Dorsolateral prefrontal cortex (tissue), 120 donors: ENCODE measurements at regions of chr3 and their contacts with region 1.

Region 1: GRCh38 chr3:157174649-157175498 is 14.9 kb upstream of the CCNL1 start:
- DNase-seq: peak; percentile 95 to 98 (median 97)
- H3K4me3 ChIP-seq: peak overlapping the region; percentile 49 to 98 (median 75)
- H3K27ac ChIP-seq: peak overlapping the region; percentile 83 to 99 (median 96)
- H3K27me3 ChIP-seq: no peaks in the 10 kb centered on the region
- CTCF ChIP-seq: peak in 32 of 56 donors; percentile 6 to 60 (median 34)

Region 2: DNA sequence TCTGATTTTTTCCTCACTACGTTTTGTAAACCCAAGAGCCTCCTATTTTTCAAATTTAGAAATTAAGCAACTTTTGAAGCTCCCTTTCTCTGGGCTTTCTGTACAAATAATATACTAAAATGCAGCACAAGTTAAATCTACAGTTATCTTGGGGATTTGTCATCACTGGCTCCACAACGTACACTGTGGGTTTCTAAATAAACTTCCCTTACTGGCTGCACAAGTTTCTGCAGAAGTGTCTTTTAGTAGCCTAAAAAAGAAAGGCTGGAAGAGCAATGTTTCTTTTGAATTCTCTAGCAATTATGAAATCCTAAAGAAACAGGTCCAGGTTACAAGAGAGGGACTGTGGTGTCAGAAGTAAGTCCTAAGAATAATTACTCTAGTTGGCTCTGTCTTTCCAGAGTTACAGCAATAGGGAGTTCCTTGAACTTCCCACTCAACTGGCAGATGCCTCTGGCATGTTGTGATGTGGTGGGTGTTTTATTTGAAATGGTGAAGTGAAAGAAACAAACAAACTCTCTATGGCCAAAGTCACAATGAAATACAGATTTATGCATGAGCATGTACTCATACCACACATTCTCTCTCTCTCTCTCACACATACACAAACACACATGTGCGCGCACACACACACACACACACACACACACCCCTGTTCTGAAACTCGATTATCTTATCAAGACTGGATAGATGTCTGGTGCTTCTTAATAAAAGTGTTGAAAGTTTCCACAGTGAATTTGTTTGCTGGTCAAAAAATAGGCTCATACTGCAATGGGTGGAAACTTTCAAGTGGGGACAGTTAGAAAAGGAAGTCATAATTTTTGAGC is 818.1 kb before region 1 on chr3:
- intact Hi-C with region 1: no loop called
- DNase-seq: no peak
- H3K4me3 ChIP-seq: no peak overlapping the region
- H3K27ac ChIP-seq: no peak overlapping the region
- H3K27me3 ChIP-seq: no peaks in the 10 kb centered on the region
- CTCF ChIP-seq: no peak

Region 3: DNA sequence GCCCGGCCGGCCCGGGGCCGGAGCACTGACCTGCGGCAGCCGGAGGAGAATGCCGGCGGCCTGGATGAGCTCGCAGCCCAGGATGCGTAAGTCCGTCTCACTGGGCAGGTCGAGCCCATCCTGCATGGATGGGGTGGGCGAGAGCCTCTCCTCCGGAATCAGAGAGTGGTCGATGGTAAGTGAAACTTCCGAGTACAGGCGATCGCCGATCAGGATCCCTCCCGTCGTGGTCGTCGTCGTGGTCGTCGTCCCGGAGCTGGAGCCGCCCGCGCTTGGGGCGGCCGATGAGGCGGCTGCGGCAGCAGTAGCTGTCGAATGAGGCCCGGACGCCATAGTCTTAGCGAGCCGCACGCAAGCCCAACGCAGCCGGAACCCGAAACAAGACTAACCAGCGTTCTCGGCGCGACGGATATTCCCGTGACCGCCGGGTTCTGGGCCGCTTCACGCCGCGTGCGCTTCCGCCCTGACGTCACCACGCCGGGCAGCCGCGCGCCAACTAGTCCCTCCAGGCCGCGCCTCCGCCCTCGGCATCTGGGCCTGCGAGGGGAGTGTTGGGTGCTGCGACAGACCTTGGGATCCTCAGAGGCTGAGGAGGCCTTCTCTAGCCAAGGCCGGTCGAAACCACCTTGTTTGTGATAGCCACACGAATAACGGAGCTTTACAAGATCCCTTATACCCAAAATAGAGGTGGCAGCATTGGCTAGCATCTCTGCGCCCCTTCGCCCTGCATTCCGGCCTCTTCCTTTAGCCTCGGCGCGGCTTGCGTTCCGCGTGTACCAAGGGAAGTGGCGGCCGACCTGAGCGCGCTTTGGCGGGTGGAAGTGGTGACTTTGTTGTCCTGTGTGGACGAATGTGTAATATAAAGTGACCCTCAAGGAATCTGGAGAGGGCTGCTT is 14.9 kb before region 1 on chr3 and contains the start of gene CCNL1:
- intact Hi-C with region 1: loop called (anchors 1 kb)
- DNase-seq: peak; percentile 90 to 96 (median 94)
- H3K4me3 ChIP-seq: peak within 1 kb of the TSS; percentile 72 to 100 (median 97)
- H3K27ac ChIP-seq: peak within 1 kb of the TSS; percentile 92 to 100 (median 99)
- H3K27me3 ChIP-seq: no peaks in the 10 kb centered on the region
- CTCF ChIP-seq: peak in 24 of 56 donors; percentile 2 to 54 (median 26)
- total RNA-seq, gene CCNL1: 53.0 to 156 (median 94.4) TPM

Region 4: DNA sequence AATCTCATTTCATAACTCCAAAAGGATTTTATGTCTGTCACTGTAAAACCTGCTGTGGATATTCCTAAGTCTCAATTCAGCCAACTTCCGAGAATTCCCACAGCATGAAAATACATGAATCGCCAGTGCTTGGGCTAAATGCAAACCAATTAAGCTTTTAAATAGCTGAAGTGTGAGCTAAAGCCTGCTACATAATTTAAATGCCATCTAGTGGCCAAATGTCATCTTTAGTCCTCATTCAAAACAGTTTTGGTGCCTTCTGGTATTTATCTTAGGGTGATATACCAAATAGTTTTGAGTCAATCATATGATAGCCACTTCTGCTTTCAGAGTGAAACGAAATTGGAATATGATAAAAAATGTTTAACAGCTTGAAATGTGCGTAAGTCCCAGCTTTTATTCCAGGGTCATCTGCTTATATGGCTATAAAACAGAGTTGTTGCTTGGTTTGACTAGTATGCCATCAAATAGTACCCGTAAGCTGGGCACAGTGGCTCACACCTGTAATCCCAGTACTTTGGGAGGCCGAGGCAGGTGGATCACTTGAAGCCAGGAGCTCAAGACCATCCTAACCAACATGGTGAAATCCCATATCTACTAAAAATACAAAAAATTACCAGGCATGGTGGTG is 26.9 kb after region 1 on chr3:
- intact Hi-C with region 1: no loop called
- DNase-seq: no peak
- H3K4me3 ChIP-seq: peak overlapping the region in 15 of 59 donors; percentile 7 to 36 (median 15)
- H3K27ac ChIP-seq: no peak overlapping the region
- H3K27me3 ChIP-seq: no peaks in the 10 kb centered on the region
- CTCF ChIP-seq: peak; percentile 43 to 82 (median 66)

Region 5: GRCh38 chr3:157405457-157405856 is 230.6 kb after region 1 on chr3:
- intact Hi-C with region 1: no loop called
- DNase-seq: no peak
- H3K4me3 ChIP-seq: no peak overlapping the region
- H3K27ac ChIP-seq: no peak overlapping the region
- H3K27me3 ChIP-seq: no peaks in the 10 kb centered on the region
- CTCF ChIP-seq: no peak

Region 6: DNA sequence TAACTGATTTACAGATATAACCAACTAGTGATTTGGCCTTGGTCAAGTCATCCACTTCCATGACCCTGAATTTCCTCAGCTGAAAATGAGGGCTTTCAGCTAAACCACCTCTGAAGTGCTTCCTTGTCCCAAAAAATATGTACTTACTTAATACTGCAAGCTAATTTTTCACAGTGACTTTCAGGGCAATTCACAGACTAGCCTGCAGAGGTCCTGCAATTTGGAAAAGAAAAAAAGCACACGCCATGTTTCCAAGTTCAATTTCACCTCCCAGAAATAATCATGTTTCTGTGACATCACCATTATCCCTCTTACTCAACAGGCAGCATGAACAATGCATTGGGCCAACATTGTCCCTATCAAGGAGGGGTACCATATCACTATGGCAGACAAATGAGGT is 713.2 kb after region 1 on chr3:
- intact Hi-C with region 1: no loop called
- DNase-seq: no peak
- H3K4me3 ChIP-seq: no peak overlapping the region
- H3K27ac ChIP-seq: no peak overlapping the region
- H3K27me3 ChIP-seq: peaks cover 0 to 4% (median 0%) of the 10 kb centered on the region in 45 donors
- CTCF ChIP-seq: no peak